T-cell (primary cell): ENCODE measurements at regions of chr13 and their contacts with region 1.

Region 1: GRCh38 chr13:99677116-99677951 is 176.1 kb downstream of the TM9SF2 start:
- DNase-seq: no peak
- ATAC-seq: no peak
- H3K4me3 ChIP-seq: no peak overlapping the region
- H3K4me3 Mint-ChIP-seq: no peak overlapping the region
- H3K27ac ChIP-seq: no peak overlapping the region
- H3K27ac Mint-ChIP-seq: no peak overlapping the region
- H3K4me1 ChIP-seq: no peaks in the 10 kb centered on the region
- H3K4me1 Mint-ChIP-seq: no peaks in the 10 kb centered on the region
- H3K27me3 ChIP-seq: no peaks in the 10 kb centered on the region
- H3K27me3 Mint-ChIP-seq: no peaks in the 10 kb centered on the region

Region 2: DNA sequence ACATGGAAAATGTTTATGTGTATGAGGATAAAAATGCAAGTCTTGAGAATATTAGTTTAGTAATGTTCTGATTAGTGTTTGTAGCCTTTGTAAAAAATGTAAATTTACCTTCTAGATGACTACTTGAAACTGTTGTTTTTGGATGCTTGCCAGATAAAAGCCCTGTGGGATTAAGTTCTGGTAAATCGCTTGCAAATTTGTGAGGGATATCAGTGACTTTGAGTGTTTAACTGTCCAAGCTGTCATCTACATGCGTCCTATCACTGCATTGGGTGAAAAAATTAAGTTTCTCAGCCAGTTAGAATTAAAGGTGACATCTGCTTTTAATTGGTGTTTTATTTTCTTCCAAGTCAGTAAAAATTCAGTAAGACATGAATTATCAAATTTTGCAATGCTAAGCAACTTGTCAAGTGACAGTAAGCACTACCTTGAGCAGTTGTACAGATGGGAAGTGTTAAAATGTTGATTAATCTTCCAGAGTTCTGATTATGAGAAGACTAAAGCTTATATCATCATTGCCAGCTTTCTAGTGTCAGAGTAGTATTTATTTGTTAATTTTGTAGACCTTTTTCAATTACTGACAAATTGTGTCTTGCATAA is 499.6 kb after region 1 on chr13:
- CTCF ChIA-PET with region 1: no interaction called
- POLR2A ChIA-PET with region 1: no interaction called
- DNase-seq: no peak
- ATAC-seq: no peak
- H3K4me3 ChIP-seq: no peak overlapping the region
- H3K4me3 Mint-ChIP-seq: no peak overlapping the region
- H3K27ac ChIP-seq: no peak overlapping the region
- H3K27ac Mint-ChIP-seq: no peak overlapping the region
- H3K4me1 ChIP-seq: no peaks in the 10 kb centered on the region
- H3K4me1 Mint-ChIP-seq: peaks cover 3 to 17% (median 8%) of the 10 kb centered on the region in 3 donors
- H3K27me3 ChIP-seq: no peaks in the 10 kb centered on the region
- H3K27me3 Mint-ChIP-seq: no peaks in the 10 kb centered on the region

Region 3: GRCh38 chr13:100530671-100531213 is 853.4 kb after region 1 on chr13:
- CTCF ChIA-PET with region 1: interaction called in 1 of 2 experiments, 16 read pairs
- POLR2A ChIA-PET with region 1: no interaction called
- DNase-seq: no peak
- ATAC-seq: no peak
- H3K4me3 ChIP-seq: no peak overlapping the region
- H3K4me3 Mint-ChIP-seq: no peak overlapping the region
- H3K27ac ChIP-seq: no peak overlapping the region
- H3K27ac Mint-ChIP-seq: no peak overlapping the region
- H3K4me1 ChIP-seq: no peaks in the 10 kb centered on the region
- H3K4me1 Mint-ChIP-seq: no peaks in the 10 kb centered on the region
- H3K27me3 ChIP-seq: no peaks in the 10 kb centered on the region
- H3K27me3 Mint-ChIP-seq: no peaks in the 10 kb centered on the region